ENCODE measurements at regions of chr5 and their contacts with region 1.

Region 1: GRCh38 chr5:84287951-84288350 is 96.7 kb downstream of the EDIL3 start:
- DNase-seq: peak; percentile 96
- ATAC-seq: peak; percentile 96
- H3K4me3 ChIP-seq: peak overlapping the region; percentile 18; the same call in 1 of the 2 replicates
- H3K27ac ChIP-seq: peak overlapping the region; percentile 82
- H3K4me1 ChIP-seq: peaks cover 16% of the 10 kb centered on the region
- H3K27me3 ChIP-seq: no peaks in the 10 kb centered on the region
- CTCF ChIP-seq: no peak

Region 2: DNA sequence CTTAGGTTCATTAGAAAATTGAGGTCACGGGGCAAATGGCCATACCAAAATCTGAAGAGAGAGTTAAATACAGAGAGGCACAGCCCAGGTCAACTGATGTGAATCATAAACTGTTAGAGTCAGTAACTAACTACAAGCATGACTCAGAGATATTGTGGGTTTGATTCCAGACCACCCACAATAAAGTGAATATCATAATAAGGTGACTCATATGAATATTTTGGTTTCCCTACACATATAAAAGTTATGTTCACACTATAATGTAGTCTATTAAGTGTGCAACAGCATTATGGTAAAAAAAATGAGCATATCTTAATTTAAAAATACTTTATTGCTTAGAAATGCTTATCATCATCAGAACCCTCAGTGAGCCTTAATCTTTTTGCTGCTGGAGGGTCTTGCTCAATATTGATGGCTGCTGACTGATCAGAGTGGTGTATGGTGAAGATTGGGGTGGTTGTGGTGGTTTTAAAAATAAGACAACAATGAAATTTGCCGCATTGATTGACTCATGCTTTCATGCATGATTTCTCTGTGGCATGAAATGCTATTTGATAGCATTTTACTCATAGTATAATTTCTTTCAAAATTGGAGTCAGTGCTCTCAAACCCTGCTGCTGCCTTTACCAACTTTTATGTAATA is 149.8 kb after region 1 on chr5:
- CTCF ChIA-PET with region 1: no interaction called
- POLR2A ChIA-PET with region 1: no interaction called
- intact Hi-C with region 1: loop called (anchors 5 kb)
- DNase-seq: peak; percentile 84
- ATAC-seq: peak; percentile 93
- H3K4me3 ChIP-seq: no peak overlapping the region
- H3K27ac ChIP-seq: peak overlapping the region; percentile 84
- H3K4me1 ChIP-seq: peaks cover 18% of the 10 kb centered on the region
- H3K27me3 ChIP-seq: no peaks in the 10 kb centered on the region
- CTCF ChIP-seq: no peak

Region 3: DNA sequence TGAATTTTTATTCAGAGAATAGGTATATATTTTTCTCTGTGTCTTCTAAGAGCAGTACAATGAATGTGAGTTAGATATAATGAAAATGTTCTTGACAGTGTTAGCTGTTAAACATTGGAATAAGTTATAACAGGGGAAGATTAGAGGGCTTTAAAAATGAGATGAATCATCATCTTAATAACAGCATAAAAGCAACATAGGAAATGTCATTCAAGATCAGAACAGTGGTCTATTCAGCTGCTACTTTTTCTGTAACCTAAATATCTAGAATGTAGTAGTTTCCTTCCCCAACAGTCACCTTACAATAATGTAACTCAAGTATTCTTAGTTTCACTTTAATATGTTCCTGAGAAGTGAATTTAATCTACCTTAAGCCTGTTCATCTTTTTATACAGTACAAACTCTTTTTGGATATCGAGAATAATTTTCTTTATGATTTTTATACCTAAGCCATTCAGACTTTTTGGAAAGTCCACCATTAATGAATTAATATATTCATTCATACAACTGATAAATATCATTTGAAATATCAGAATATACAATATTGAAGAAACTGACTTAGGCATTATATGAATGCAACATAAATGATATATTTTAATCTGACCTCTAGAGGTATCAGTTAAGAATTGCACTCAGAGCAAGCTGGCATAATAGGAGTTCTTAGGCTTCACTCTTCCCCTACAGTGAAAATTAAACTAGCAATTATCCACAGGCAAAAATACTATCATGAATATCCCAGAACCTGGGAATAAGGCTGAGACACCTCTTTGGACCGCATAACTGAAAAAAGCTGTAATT is 162.9 kb after region 1 on chr5:
- CTCF ChIA-PET with region 1: no interaction called
- POLR2A ChIA-PET with region 1: no interaction called
- intact Hi-C with region 1: loop called (anchors 5 kb)
- DNase-seq: peak; percentile 18
- ATAC-seq: peak; percentile 76
- H3K4me3 ChIP-seq: no peak overlapping the region
- H3K27ac ChIP-seq: no peak overlapping the region
- H3K4me1 ChIP-seq: no peaks in the 10 kb centered on the region
- H3K27me3 ChIP-seq: no peaks in the 10 kb centered on the region
- CTCF ChIP-seq: peak; percentile 60